Panc1 (cell line): ENCODE measurements at regions of chr6 and their contacts with region 1.

Region 1: GRCh38 chr6:3211681-3212080 is 15.8 kb downstream of the TUBB2B start:
- DNase-seq: no peak
- ATAC-seq: no peak
- H3K4me3 ChIP-seq: no peak overlapping the region
- H3K27ac ChIP-seq: no peak overlapping the region
- H3K4me1 ChIP-seq: peaks cover 10% of the 10 kb centered on the region
- H3K27me3 ChIP-seq: no peaks in the 10 kb centered on the region
- CTCF ChIP-seq: no peak

Region 2: GRCh38 chr6:3147914-3148757 is 63.5 kb before region 1 on chr6:
- CTCF ChIA-PET with region 1: no interaction called
- POLR2A ChIA-PET with region 1: no interaction called
- in situ Hi-C with region 1: no loop called
- intact Hi-C with region 1: no loop called
- DNase-seq: no peak
- ATAC-seq: peak; percentile 60
- H3K4me3 ChIP-seq: no peak overlapping the region
- H3K27ac ChIP-seq: no peak overlapping the region
- H3K4me1 ChIP-seq: no peaks in the 10 kb centered on the region
- H3K27me3 ChIP-seq: no peaks in the 10 kb centered on the region
- CTCF ChIP-seq: no peak; the same call in 1 of the 2 replicates

Region 3: GRCh38 chr6:3245216-3245615 is 33.5 kb after region 1 on chr6:
- CTCF ChIA-PET with region 1: no interaction called
- POLR2A ChIA-PET with region 1: interaction called, 10 read pairs
- in situ Hi-C with region 1: no loop called
- intact Hi-C with region 1: no loop called
- DNase-seq: no peak
- ATAC-seq: no peak
- H3K4me3 ChIP-seq: no peak overlapping the region
- H3K27ac ChIP-seq: no peak overlapping the region
- H3K4me1 ChIP-seq: peaks cover 7% of the 10 kb centered on the region; the same call in 1 of the 2 replicates
- H3K27me3 ChIP-seq: no peaks in the 10 kb centered on the region
- CTCF ChIP-seq: no peak